ENCODE measurements at regions of chr5 and their contacts with region 1.

Region 1: DNA sequence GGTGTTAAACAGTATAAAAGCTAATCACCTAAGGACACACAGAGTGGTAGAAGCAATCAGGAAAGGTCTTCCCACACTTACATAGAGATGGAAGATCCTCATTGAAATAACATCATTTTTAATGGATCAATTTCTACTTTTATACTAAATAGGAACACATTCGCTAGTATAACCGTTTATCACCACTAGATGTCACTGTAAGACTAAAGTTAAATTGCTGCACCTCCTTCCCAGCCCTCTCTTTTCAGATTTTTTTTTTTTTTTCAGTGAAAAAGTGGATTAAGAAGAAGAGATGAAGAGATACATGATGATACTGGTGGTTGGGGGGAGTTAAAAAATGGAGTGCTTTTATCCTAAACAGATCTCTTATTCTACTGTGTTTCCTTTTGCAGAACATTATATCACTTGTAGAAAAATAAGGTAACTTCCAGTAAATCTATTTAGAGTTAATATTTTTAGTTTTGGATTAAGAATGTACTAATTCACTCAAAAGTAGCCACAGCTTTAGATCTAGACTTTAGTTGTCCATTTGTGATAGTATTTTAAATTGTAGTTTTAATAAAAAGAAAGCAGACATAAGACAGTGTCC is 116.9 kb upstream of the ARRDC3 start:
- DNase-seq: peak; percentile 35
- ATAC-seq: 0 out of 2 replicates have a peak, but pooled peaks have one; percentile 69
- H3K4me3 ChIP-seq: no peak overlapping the region
- H3K27ac ChIP-seq: peak overlapping the region; percentile 66; the same call in 1 of the 2 replicates
- H3K4me1 ChIP-seq: no peaks in the 10 kb centered on the region; the same call in 1 of the 2 replicates
- H3K27me3 ChIP-seq: no peaks in the 10 kb centered on the region
- CTCF ChIP-seq: peak; percentile 62; the same call in 1 of the 2 replicates

Region 2: DNA sequence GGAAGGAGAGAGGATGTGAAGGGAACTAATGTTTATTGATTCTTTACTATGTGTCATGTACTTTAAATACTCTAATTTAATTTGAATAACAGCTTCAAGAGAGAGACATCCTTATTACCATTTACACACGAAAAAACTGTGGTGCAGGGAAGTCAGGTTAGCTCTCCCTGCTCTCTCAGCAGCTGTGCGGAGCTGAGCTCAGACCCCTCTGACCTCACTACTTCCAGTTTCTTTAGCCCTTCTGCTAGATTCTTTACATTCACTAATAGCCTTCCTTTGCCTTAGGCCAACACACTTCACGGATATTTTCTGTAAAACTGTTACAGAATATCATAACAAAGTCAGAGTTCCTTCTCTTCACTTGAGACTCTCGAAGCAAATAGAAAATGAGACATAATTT is 14.4 kb after region 1 on chr5:
- CTCF ChIA-PET with region 1: no interaction called
- POLR2A ChIA-PET with region 1: no interaction called
- in situ Hi-C with region 1: no loop called
- intact Hi-C with region 1: no loop called
- DNase-seq: no peak
- ATAC-seq: no peak
- H3K4me3 ChIP-seq: no peak overlapping the region
- H3K27ac ChIP-seq: no peak overlapping the region
- H3K4me1 ChIP-seq: no peaks in the 10 kb centered on the region
- H3K27me3 ChIP-seq: no peaks in the 10 kb centered on the region
- CTCF ChIP-seq: no peak

Region 3: GRCh38 chr5:91635950-91636734 is 136.1 kb after region 1 on chr5:
- CTCF ChIA-PET with region 1: no interaction called
- POLR2A ChIA-PET with region 1: no interaction called
- in situ Hi-C with region 1: no loop called
- intact Hi-C with region 1: loop called (anchors 5 kb)
- DNase-seq: no peak
- ATAC-seq: no peak
- H3K4me3 ChIP-seq: no peak overlapping the region
- H3K27ac ChIP-seq: no peak overlapping the region
- H3K4me1 ChIP-seq: peaks cover 3% of the 10 kb centered on the region; the same call in 1 of the 2 replicates
- H3K27me3 ChIP-seq: no peaks in the 10 kb centered on the region
- CTCF ChIP-seq: peak; percentile 34

Region 4: GRCh38 chr5:91910247-91910646 is 410.2 kb after region 1 on chr5:
- CTCF ChIA-PET with region 1: no interaction called
- POLR2A ChIA-PET with region 1: no interaction called
- in situ Hi-C with region 1: no loop called
- intact Hi-C with region 1: loop called (anchors 10 kb)
- DNase-seq: no peak
- ATAC-seq: no peak
- H3K4me3 ChIP-seq: no peak overlapping the region
- H3K27ac ChIP-seq: no peak overlapping the region
- H3K4me1 ChIP-seq: no peaks in the 10 kb centered on the region
- H3K27me3 ChIP-seq: no peaks in the 10 kb centered on the region
- CTCF ChIP-seq: no peak; the same call in 1 of the 2 replicates

Measured in Panc1 (cell line).